HEK293 (cell line): ENCODE measurements at regions of chr18 and their contacts with region 1.

Region 1: DNA sequence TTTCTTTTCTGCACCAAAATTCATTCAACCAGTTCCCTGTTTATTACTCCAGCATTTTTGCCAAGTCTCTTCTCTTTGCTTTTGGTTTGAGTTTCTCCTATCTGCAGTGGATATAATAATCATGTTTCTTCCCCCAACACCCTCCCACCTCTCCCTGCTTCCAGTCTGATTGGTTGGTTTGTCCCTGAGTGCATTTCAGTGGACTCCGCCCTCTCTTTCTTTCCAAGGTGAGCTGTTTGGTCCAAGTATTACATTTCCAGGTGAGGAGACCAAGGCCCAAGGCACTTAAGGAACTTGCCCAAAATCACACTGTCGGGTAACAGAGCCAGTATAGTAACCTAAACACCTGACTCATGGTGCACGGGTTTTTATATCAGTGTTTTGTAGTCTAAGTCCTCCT is 17.7 kb downstream of the MRO start:
- H3K4me3 ChIP-seq: no peak overlapping the region
- H3K27ac ChIP-seq: no peak overlapping the region
- H3K4me1 ChIP-seq: no peaks in the 10 kb centered on the region
- CTCF ChIP-seq: no peak

Region 2: DNA sequence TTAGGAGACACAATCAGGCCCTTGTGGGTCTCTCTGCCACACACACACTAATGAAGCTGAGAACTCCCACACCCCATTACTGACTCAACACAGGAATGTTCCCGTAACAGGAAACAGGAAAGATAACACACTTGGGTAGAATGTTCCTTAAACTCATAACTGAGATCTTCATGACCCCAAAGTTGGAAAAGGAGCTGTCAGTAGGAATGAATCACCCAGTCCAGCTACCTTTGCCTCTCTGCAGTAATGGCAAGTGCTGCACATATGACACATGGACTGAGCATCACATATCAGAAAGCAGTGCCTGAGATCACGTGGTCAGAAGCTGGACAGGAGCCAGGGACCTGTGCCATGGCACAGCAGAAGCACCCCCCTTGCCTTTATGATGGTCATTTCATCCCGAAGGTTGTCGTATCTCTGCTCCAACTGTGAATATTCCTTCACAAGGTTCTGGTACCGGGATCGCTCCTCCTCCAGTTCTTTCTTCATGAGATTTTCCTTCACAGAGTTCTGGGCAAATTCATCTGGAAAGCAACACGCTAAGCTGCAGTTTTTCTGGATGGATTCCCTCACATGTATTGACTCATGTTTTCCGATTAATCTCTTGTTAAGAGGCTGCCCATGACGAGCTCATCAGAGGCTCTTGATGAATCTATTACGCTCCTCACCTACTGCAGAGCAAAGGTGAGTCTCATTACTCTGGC is 923.4 kb before region 1 on chr18:
- CTCF ChIA-PET with region 1: no interaction called
- POLR2A ChIA-PET with region 1: no interaction called
- H3K4me3 ChIP-seq: no peak overlapping the region
- H3K27ac ChIP-seq: no peak overlapping the region
- H3K4me1 ChIP-seq: no peaks in the 10 kb centered on the region
- CTCF ChIP-seq: no peak

Region 3: GRCh38 chr18:50674307-50674706 is 127.8 kb before region 1 on chr18:
- CTCF ChIA-PET with region 1: no interaction called
- POLR2A ChIA-PET with region 1: no interaction called
- H3K4me3 ChIP-seq: no peak overlapping the region
- H3K27ac ChIP-seq: no peak overlapping the region
- H3K4me1 ChIP-seq: 0 out of 2 replicates have a peak, but pooled peaks cover 3% of the 10 kb centered on the region
- CTCF ChIP-seq: no peak

Region 4: DNA sequence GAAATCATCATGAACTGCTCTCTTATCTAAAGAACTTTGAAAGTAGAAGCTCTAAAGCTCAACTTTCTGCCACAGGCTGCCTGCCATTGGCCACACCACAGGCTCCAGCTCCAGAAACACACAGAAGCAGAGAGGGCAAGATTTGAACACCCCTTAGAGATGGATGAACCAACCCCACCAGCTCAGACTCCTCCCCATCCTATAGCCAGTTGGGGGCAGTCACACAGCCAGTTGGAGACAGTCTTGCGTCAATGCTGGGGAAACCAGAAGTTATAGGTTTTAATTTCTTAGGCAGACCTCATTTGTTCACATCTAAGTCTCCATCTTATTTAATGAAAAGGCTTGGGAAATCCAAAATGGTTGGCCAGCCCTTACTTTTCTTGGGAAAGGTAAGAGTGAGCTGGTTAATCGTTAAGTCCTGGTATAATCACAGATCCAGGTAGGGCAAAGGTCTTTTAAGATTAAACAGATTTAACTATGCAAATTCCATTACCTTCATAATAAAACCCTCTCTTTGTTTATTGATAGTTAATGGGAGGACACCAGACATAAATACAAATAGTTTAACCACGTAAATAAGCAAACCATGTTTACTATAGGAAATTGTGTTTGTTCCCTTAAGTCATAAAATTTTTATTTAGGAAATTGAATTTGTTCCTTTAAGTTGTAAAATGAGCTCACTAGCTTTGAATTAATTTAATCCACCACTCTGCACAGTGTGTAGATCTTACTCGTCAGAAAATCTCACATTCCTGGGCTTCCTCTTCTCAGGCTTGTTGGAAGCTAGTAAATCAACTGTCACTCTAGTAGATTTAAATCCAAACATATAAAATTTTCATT is 10.3 kb before region 1 on chr18:
- CTCF ChIA-PET with region 1: interaction called, 11 read pairs
- POLR2A ChIA-PET with region 1: interaction called, 7 read pairs
- H3K4me3 ChIP-seq: no peak overlapping the region
- H3K27ac ChIP-seq: no peak overlapping the region
- H3K4me1 ChIP-seq: no peaks in the 10 kb centered on the region
- CTCF ChIP-seq: no peak